Activated T-helper 1 cell treated with anti-CD3 and anti-CD28 coated beads, Interleukin-12 subunit alpha, Interleukin-12 subunit beta, Interleukin-2, Interleukin-4 antibody, amounts not matched to agents 30 ng/mL and 10 ng/mL and 1 ng/mL, durations not matched to agents 14 hours and 24 hours and 36 hours (primary cell): ENCODE measurements at regions of chr17 and their contacts with region 1.

Region 1: DNA sequence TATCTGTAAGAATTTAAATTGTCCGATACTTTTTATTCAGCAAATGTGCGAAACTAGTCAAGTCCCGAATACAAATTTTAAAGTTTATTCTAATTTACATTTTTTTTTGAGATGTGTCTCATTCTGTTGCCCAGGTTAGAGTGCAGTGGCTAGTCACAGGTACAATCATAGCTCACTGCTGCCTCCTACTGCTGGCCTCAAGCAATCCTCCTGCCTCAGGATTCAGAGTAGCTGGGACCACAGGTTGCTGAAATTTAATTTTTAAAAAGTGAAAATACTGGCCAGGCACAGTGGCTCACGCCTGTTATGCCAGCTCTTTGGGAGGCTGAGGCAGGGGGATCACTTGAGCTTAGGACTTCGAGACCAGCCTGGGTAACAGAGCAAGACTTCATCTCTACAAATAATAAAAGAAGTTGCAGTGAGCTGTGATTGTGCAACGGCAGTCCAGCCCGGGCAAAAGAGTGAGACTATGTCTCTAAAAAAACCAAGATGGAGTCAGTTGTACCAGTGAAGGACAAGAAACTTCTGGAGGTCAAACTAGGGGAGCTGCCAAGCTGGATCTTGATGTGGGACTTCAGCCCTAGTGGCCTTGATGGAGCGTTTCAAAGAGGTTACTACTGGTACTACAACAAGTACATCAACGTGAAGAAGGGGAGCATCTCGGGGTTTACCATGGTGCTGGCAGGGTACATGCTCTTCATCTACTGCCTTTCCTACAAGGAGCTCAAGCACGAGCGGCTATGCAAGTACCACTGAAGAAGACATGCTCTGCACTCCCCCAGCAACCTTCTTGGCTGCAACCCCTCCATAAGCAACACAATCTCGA is 5.6 kb downstream of the POLG2 start:
- DNase-seq: peak; percentile 53
- H3K4me3 Mint-ChIP-seq: no peak overlapping the region
- H3K27ac Mint-ChIP-seq: no peak overlapping the region
- H3K4me1 Mint-ChIP-seq: peaks cover 30% of the 10 kb centered on the region
- H3K27me3 Mint-ChIP-seq: no peaks in the 10 kb centered on the region

Region 2: GRCh38 chr17:64306850-64307463 is 184.3 kb before region 1 on chr17:
- intact Hi-C with region 1: loop called (anchors 5 kb)
- DNase-seq: peak; percentile 43
- H3K4me3 Mint-ChIP-seq: no peak overlapping the region
- H3K27ac Mint-ChIP-seq: no peak overlapping the region
- H3K4me1 Mint-ChIP-seq: peaks cover 5% of the 10 kb centered on the region
- H3K27me3 Mint-ChIP-seq: peaks cover 4% of the 10 kb centered on the region

Region 3: GRCh38 chr17:64320613-64321553 is 170.4 kb before region 1 on chr17:
- intact Hi-C with region 1: loop called (anchors 1 kb)
- DNase-seq: peak; percentile 26
- H3K4me3 Mint-ChIP-seq: no peak overlapping the region
- H3K27ac Mint-ChIP-seq: no peak overlapping the region
- H3K4me1 Mint-ChIP-seq: peaks cover 18% of the 10 kb centered on the region
- H3K27me3 Mint-ChIP-seq: peaks cover 25% of the 10 kb centered on the region